ENCODE measurements at regions of chr19 and their contacts with region 1.

Region 1: DNA sequence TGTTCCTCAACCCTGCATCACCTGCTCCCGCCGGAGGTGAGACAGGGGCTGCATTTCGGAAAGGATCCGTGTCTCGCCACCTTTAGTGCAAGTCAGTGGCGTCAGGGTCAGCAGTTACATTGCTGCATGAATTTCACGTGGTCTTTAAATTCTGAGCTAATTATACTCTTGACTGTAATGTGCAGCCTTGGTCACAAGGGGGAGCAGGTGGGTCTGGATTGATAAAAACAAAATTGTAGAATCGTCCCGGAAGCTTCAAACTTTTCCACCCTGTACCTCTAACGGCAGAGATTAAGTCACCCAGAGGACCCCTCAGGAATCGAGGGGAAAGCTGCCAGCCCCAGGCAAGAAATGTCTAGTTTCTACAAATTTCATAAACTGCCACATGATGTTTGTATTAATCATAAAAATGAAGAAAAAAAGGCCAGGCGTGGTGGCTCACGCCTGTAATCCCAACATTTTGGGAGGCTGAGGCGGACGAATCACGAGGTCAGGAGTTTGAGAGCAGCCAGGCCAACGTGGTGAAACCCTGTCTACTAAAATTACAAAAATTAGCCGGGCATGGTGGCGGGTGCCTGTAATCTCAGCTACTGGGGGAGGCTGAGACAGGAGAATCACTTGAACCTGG is 20.2 kb downstream of the BBC3 start:
- DNase-seq: peak; percentile 90
- ATAC-seq: peak; percentile 79
- H3K4me3 Mint-ChIP-seq: no peak overlapping the region
- H3K27ac Mint-ChIP-seq: peak overlapping the region; percentile 91
- H3K4me1 Mint-ChIP-seq: peaks cover 19% of the 10 kb centered on the region
- H3K27me3 Mint-ChIP-seq: no peaks in the 10 kb centered on the region

Region 2: DNA sequence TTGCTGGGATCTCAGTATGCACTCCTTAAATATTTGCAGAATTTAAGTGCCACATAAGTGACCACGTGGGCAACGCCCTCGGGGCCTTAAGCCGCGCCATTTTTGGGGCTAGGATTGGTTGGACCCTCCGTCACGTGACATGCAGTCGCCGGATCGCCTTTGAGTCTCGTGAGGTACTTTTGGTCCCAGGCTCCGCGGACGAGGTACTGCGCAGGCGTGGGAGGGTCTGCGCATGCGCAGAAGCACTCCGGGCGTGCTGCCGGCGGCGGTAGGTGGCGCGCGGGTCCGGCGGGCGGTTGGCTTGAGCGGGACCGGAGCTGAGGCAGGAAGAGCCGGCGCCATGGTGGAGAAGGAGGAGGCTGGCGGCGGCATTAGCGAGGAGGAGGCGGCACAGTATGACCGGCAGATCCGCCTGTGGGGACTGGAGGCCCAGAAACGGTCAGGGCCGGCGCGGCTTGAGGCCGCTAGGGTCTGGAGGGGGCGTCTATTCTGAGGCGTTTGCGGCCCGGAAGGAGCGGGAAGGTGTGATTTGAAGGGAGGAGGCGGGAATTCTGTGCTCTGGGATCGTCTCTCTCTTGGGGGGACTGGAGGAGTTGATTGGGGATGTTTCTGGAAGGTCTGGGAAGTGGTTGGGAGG is 80.1 kb before region 1 on chr19 and contains the start of gene SAE1:
- CTCF ChIA-PET with region 1: interaction called, 16 read pairs
- POLR2A ChIA-PET with region 1: no interaction called
- DNase-seq: peak; percentile 94
- ATAC-seq: peak; percentile 91
- H3K4me3 Mint-ChIP-seq: peak within 1 kb of the TSS; percentile 99
- H3K27ac Mint-ChIP-seq: peak within 1 kb of the TSS; percentile 98
- H3K4me1 Mint-ChIP-seq: peaks cover 51% of the 10 kb centered on the region
- H3K27me3 Mint-ChIP-seq: no peaks in the 10 kb centered on the region
- total RNA-seq, gene SAE1: 165 to 175 TPM

Region 3: GRCh38 chr19:47152224-47153017 is 58.4 kb before region 1 on chr19:
- CTCF ChIA-PET with region 1: interaction called, 64 read pairs
- POLR2A ChIA-PET with region 1: interaction called, 4 read pairs
- DNase-seq: no peak
- ATAC-seq: no peak
- H3K4me3 Mint-ChIP-seq: no peak overlapping the region
- H3K27ac Mint-ChIP-seq: no peak overlapping the region
- H3K4me1 Mint-ChIP-seq: peaks cover 40% of the 10 kb centered on the region
- H3K27me3 Mint-ChIP-seq: no peaks in the 10 kb centered on the region

Region 4: GRCh38 chr19:47190167-47190727 is 20.6 kb before region 1 on chr19:
- CTCF ChIA-PET with region 1: interaction called, 53 read pairs
- POLR2A ChIA-PET with region 1: interaction called, 4 read pairs
- DNase-seq: peak; percentile 34
- ATAC-seq: no peak
- H3K4me3 Mint-ChIP-seq: no peak overlapping the region
- H3K27ac Mint-ChIP-seq: peak overlapping the region; percentile 27
- H3K4me1 Mint-ChIP-seq: peaks cover 61% of the 10 kb centered on the region
- H3K27me3 Mint-ChIP-seq: no peaks in the 10 kb centered on the region

Region 5: GRCh38 chr19:47225746-47226425 is 15.1 kb after region 1 on chr19:
- CTCF ChIA-PET with region 1: interaction called, 109 read pairs
- POLR2A ChIA-PET with region 1: interaction called, 39 read pairs
- DNase-seq: peak; percentile 88
- ATAC-seq: peak; percentile 63
- H3K4me3 Mint-ChIP-seq: peak overlapping the region; percentile 37
- H3K27ac Mint-ChIP-seq: peak overlapping the region; percentile 90
- H3K4me1 Mint-ChIP-seq: peaks cover 20% of the 10 kb centered on the region
- H3K27me3 Mint-ChIP-seq: no peaks in the 10 kb centered on the region

Measured in activated CD8-positive, alpha-beta T cell treated with anti-CD3 and anti-CD28 coated beads, Interleukin-2, amount 10 ng/mL, durations not matched to agents 7 days and 5 days (primary cell).